ENCODE measurements at regions of chr18 and their contacts with region 1.

Region 1: DNA sequence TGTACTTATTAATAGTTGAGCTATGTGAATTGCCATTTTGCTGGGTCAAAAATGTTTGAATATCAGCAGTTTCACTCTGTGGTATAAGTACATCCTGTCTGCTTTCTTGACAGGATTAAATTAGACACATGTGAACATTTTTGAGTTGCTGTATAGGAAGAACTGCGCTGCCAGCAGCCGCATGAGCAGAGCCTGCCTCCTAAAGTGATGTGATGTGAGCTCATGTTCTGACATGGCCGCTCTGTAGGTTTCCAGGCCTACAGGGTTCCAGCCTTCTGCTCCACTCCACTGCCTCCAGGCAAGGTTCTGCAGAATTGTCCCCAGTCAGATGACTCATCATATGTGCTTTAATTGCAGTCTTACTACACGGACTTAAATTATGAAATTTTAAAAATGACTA is 119.7 kb upstream of the NFATC1 start:
- DNase-seq: no peak
- H3K4me3 ChIP-seq: no peak overlapping the region
- H3K27ac ChIP-seq: no peak overlapping the region
- H3K4me1 ChIP-seq: no peaks in the 10 kb centered on the region
- H3K27me3 ChIP-seq: no peaks in the 10 kb centered on the region
- CTCF ChIP-seq: no peak
- POLR2A ChIP-seq: no peak

Region 2: DNA sequence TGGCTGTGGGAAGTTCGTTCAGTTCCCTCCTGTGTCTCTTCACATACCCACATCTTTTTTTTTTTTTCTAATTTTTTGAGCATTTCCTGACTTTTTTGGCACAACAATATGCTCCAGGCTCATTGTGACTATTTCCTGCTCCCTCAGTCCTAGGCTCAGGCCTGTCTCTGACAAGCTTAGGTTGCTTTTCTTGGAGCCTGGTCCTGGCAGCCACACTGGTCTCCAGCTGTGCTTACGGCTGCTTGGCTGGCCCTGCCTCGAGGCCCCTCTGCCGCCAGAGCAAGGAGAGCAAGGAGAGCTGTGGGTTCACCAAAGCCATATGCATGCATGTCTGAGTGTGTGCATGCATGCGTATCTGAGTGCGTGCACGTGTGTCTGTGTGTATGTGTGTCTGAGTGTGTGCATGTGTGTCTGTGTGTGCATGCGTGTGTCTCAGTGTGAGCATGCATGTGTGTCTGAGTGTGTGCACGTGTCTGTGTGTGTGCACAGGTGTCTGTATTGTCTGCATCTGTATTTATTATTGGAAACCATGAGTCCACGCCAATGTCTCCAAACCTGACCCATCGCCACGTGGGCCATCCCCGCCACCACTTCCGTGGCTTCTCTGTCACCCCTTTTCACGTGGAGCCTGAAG is 1062.5 kb before region 1 on chr18:
- intact Hi-C with region 1: loop called (anchors 10 kb)
- DNase-seq: no peak
- H3K4me3 ChIP-seq: no peak overlapping the region
- H3K27ac ChIP-seq: no peak overlapping the region
- H3K4me1 ChIP-seq: no peaks in the 10 kb centered on the region
- H3K27me3 ChIP-seq: peaks cover 0 to 3% of the 10 kb centered on the region in 2 donors
- CTCF ChIP-seq: no peak
- POLR2A ChIP-seq: no peak

Region 3: DNA sequence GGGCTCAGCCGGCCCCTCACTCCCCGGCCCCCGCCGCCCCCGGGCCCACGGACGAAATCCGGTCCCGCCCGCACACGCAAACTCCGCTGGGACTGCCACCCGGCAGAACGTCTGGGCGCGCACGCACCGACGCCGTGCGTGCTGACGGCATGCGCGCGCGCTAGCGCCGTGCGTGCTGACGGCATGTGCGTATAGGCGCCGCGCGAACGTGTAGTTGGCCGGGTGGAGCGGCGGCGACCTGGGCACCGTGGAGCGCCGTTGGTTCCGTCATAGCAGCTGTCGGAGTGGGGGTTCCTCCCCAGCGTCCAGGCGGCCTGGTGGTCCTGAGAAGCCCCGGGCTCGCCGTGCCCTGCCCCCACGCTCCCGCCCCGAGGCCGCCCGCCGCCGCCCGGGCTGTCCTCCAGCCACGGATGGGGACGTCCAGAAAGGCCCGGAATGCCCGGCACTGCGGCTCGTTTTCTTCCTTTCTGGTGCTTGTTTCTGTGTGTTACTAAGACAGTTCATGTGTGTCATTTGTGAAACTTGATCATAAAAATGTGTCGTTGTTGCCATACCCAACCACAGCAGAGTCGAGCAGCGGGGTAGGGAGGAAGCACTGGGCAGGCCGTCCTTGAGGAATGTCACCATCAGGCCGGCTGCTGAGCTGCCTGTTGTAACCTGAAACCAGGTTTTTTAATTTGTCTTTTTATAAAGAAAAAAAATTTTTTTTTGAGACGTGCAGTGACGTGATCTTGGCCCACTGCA is 712.6 kb after region 1 on chr18 and contains the start of gene TXNL4A:
- intact Hi-C with region 1: no loop called
- DNase-seq: peak; percentile 70 to 75
- H3K4me3 ChIP-seq: peak within 1 kb of the TSS; percentile 89 to 91 (median 90)
- H3K27ac ChIP-seq: peak within 1 kb of the TSS; percentile 94 to 98
- H3K4me1 ChIP-seq: peaks cover 4 to 11% of the 10 kb centered on the region in 2 donors
- H3K27me3 ChIP-seq: no peaks in the 10 kb centered on the region
- CTCF ChIP-seq: peak in 1 of 3 donors; percentile 14
- POLR2A ChIP-seq: peak; percentile 48
- total RNA-seq, gene TXNL4A: 21.4 to 39.2 (median 23.9) TPM